Activated CD8-positive, alpha-beta T cell treated with anti-CD3 and anti-CD28 coated beads, Interleukin-2, amount 10 ng/mL, durations not matched to agents 7 days and 5 days (primary cell): ENCODE measurements at regions of chr19 and their contacts with region 1.

Region 1: GRCh38 chr19:45730389-45731288 is at the start of gene FBXO46:
- DNase-seq: peak; percentile 97
- ATAC-seq: peak; percentile 99
- H3K4me3 Mint-ChIP-seq: peak within 1 kb of the TSS; percentile 91
- H3K27ac Mint-ChIP-seq: peak within 1 kb of the TSS; percentile 88
- H3K4me1 Mint-ChIP-seq: peaks cover 26% of the 10 kb centered on the region
- H3K27me3 Mint-ChIP-seq: no peaks in the 10 kb centered on the region
- total RNA-seq, gene FBXO46: 32.6 to 33.9 TPM

Region 2: GRCh38 chr19:45717166-45717982 is 13.3 kb before region 1 on chr19:
- CTCF ChIA-PET with region 1: interaction called, 25 read pairs
- POLR2A ChIA-PET with region 1: interaction called, 22 read pairs
- DNase-seq: peak; percentile 99
- ATAC-seq: peak; percentile 99
- H3K4me3 Mint-ChIP-seq: peak overlapping the region; percentile 93
- H3K27ac Mint-ChIP-seq: peak overlapping the region; percentile 89
- H3K4me1 Mint-ChIP-seq: peaks cover 38% of the 10 kb centered on the region
- H3K27me3 Mint-ChIP-seq: no peaks in the 10 kb centered on the region